GM10248 (cell line): ENCODE measurements at regions of chr17 and their contacts with region 1.

Region 1: DNA sequence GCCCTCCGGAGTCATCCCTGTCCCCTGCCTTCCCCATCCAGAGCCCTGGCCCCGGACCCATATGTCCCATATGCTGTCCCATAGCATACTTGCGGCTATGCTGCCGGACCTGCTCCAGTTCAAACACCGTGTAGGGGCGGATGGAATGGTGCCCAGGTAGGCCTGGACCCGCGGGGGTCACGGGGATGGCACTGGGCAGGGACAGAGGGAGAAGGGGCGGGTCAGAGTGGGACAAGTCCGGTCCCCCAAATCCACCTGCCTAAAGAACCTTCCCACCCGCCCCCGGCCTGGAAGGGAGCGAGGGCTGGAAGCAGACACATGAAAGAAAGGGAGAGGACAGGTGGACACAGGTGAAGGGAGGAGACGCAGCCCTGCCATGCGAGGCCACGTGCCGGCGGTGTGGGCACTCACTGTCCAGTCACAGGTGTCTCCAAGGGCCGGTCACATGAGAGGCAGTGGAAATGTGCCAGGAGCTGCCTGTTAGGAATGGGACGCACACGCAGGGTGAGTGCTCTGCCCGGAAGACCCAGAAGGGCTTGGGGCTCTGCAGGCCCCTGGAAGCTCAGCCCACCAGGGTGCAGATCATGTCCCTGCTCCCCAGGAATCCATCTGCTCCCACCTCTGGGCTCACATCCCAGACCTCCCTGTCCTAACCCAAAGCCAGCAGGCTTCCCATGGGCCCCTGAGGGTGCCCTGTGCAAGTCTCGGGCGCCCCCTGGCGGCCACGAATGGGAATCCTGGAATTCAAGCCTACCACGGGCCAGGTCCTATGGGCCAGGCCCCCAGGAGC is 14.0 kb downstream of the UBALD2 start:
- DNase-seq: peak; percentile 90
- CTCF ChIP-seq: peak; percentile 92

Region 2: DNA sequence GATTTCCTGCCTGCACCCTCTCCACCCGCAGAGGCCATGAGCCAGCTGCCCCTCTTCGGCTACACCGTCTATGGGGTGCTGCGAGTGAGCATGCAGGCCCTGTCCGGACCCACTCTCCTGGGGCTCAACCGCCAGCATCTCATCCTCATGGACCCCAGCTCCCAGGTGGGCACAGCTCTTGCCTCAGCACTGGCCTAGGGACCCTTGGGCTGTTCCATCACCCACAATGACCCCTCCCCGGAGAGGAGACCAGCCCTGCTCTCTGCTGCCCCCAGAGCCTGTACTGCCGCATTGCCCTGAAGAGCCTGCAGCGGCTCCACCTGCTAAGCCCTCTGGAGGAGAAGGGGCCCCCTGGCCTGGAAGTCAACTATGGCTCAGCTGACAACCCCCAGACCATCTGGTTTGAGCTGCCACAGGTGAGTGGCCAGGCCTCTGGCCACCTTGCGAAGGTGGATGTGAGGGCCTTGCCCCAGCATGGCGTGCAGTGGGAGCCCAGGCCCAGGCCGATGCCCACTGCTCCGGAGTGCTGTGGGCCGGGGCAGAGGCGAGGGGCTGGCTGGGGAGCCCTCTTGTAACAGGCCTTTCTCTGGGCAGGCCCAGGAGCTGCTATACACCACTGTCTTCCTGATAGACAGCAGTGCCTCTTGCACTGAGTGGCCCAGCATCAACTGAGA is 653.2 kb before region 1 on chr17:
- CTCF ChIA-PET with region 1: no interaction called
- POLR2A ChIA-PET with region 1: no interaction called
- DNase-seq: peak; percentile 57
- CTCF ChIP-seq: peak; percentile 54

Region 3: DNA sequence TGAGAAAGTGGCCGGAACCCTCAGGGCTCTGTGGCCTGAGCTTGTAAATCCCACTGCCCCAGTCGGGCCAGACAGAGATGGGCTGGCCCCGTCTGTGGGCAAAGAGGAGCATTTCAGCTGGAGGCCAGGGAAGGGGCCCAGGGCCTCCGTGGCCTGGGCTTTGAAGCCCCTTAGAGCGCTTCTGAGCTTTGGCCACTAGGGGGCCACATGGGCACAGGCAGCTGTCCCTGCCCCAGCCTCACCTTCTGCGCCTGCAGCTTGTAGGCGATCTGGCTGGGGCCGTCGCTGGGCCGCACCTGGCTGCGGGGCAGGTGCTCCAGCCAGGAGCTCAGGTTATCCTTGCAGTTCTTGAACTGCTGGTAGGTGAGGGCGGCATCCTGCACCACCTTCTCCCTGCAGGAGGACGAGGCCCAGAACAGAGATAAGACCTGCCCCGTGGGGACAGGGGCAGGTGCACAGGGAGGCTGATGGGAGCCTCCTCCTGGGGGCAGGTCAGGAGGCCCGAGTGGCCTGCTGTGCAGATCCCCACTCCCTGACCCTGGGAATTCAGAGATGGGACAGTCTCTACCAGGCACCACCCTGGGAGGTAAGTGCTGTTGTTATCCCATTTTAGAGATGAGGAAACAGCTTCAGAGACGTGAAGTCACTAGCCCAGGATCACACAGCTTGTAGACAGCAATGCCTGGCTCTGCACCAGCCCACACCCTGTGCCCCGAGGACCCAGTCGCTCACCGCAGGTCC is 264.8 kb before region 1 on chr17:
- CTCF ChIA-PET with region 1: interaction called, 59 read pairs
- POLR2A ChIA-PET with region 1: interaction called, 3 read pairs
- DNase-seq: peak; percentile 93
- CTCF ChIP-seq: peak; percentile 99

Region 4: DNA sequence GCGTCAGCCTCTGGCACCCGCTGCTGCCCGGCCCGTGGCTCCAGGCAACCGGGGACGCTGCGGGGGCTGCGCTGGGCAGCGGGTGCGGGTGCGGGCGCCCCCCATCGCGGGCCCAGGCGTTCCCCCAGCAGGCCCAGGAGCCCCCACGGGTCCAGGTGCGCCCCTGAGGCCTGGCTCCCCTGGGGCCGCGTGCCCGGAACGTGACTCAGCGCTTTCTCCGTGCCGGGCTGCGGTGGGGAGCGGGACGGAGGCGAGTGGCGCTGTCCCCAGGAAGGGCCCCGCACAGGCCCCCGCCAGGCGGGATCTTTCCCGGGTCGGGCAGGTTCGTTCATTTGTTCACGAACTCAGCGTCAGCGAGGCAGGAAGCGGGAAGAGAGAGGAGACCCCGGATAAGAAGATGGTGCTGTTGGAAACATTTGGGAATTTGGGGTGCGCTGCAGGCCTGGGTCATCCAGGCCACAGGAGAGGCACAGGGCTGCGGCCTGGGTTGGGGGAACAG is 157.2 kb before region 1 on chr17:
- CTCF ChIA-PET with region 1: interaction called, 337 read pairs
- POLR2A ChIA-PET with region 1: interaction called, 7 read pairs
- DNase-seq: no peak
- CTCF ChIP-seq: no peak

Region 5: GRCh38 chr17:76182016-76182764 is 97.0 kb before region 1 on chr17:
- CTCF ChIA-PET with region 1: interaction called, 55 read pairs
- POLR2A ChIA-PET with region 1: no interaction called
- DNase-seq: peak; percentile 83
- CTCF ChIP-seq: peak; percentile 91

Region 6: GRCh38 chr17:76246080-76247066 is 32.8 kb before region 1 on chr17:
- CTCF ChIA-PET with region 1: interaction called, 11 read pairs
- POLR2A ChIA-PET with region 1: interaction called, 4 read pairs
- DNase-seq: peak; percentile 87
- CTCF ChIP-seq: no peak

Region 7: DNA sequence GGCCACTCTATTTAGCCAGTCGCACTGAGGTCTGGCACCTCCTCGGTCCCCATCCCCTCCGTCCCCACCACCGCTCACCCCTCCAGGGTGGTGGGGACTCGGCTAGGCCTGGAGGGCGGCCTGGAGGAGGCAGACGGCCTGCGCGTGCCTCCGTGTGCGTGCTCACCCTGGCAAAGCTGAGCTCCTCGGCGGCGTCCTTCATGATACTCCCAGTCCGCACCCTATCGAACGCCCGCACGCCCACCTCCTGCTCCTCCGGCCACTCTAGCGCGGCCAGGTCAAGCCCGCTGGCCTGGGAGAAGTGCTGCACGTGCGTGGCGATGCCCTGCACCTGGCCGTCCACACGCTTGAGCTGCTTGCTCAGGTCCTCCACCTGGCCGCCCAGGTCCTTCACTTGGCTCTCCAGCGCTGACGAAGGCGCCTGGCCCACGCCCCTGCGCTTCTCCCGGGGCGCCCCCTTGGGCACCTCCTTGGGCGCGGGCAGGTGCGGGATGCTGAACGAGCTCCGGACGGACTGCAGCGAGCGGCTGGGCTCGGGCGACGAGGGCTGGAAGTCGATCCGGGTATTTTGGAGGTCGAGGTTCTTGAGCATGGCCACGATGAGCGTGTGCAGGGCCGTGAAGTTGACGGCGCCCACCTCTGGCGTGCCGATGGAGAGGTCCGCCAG is 28.3 kb after region 1 on chr17:
- CTCF ChIA-PET with region 1: interaction called, 63 read pairs
- POLR2A ChIA-PET with region 1: no interaction called
- DNase-seq: no peak
- CTCF ChIP-seq: no peak

Region 8: GRCh38 chr17:76473541-76473985 is 194.4 kb after region 1 on chr17:
- CTCF ChIA-PET with region 1: no interaction called
- POLR2A ChIA-PET with region 1: no interaction called
- DNase-seq: no peak
- CTCF ChIP-seq: peak; percentile 24